ENCODE measurements at regions of chr9 and their contacts with region 1.

Region 1: GRCh38 chr9:98255578-98256296 is at the start of gene TBC1D2:
- DNase-seq: peak; percentile 85
- ATAC-seq: peak; percentile 94
- H3K4me3 ChIP-seq: peak within 1 kb of the TSS; percentile 75
- H3K27ac ChIP-seq: peak within 1 kb of the TSS; percentile 93
- H3K4me1 ChIP-seq: peaks cover 4% of the 10 kb centered on the region
- H3K27me3 ChIP-seq: no peaks in the 10 kb centered on the region
- CTCF ChIP-seq: peak; percentile 15 to 28 (median 21); a peak in 2 of 6 replicates
- EP300 ChIP-seq: no peak
- POLR2A ChIP-seq: peak; percentile 92
- RAD21 ChIP-seq: no peak
- polyA plus RNA-seq, gene TBC1D2: 0.04 to 0.06 TPM

Region 2: DNA sequence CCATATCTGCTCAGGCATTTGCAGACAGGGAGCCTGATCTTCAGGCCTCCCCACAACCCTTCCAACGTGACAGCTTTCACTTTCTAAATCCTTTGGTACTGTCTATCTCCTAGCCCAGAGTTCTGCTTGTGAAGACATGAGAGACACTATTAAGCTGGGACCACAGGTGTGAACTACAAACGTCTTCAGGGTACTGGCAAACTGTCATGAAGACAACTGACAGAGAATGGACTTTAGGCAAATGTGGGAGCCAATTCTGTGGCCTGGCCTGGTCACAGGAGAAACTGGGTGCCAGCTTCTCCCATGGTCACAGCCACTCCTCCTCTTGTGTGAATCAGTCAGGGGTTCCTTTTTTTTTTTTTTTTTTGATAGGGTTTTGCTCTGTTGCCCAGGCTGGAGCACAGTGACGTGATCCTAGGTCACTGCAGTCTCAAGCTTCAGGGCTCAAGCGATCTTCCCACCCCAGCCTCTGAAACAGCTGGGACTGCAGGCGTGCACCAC is 147.2 kb before region 1 on chr9:
- CTCF ChIA-PET with region 1: interaction called, 12 read pairs
- POLR2A ChIA-PET with region 1: interaction called, 5 read pairs
- RAD21 ChIA-PET with region 1: interaction called, 5 read pairs
- SMC1A ChIA-PET with region 1: interaction called, 4 read pairs
- in situ Hi-C with region 1: no loop called
- intact Hi-C with region 1: no loop called
- DNase-seq: peak; percentile 80
- ATAC-seq: peak; percentile 81
- H3K4me3 ChIP-seq: peak overlapping the region; percentile 19; the same call in 1 of the 2 replicates
- H3K27ac ChIP-seq: peak overlapping the region; percentile 91
- H3K4me1 ChIP-seq: peaks cover 62% of the 10 kb centered on the region
- H3K27me3 ChIP-seq: no peaks in the 10 kb centered on the region
- CTCF ChIP-seq: no peak
- EP300 ChIP-seq: peak in 1 of 2 experiments; percentile 23; a peak in 1 of 4 replicates
- POLR2A ChIP-seq: no peak
- RAD21 ChIP-seq: no peak

Region 3: GRCh38 chr9:98391867-98392266 is 136.1 kb after region 1 on chr9:
- CTCF ChIA-PET with region 1: no interaction called
- POLR2A ChIA-PET with region 1: no interaction called
- RAD21 ChIA-PET with region 1: no interaction called
- SMC1A ChIA-PET with region 1: no interaction called
- in situ Hi-C with region 1: no loop called
- intact Hi-C with region 1: no loop called
- DNase-seq: no peak
- ATAC-seq: no peak
- H3K4me3 ChIP-seq: no peak overlapping the region
- H3K27ac ChIP-seq: no peak overlapping the region
- H3K4me1 ChIP-seq: no peaks in the 10 kb centered on the region
- H3K27me3 ChIP-seq: no peaks in the 10 kb centered on the region
- CTCF ChIP-seq: no peak
- EP300 ChIP-seq: no peak
- POLR2A ChIP-seq: no peak
- RAD21 ChIP-seq: no peak

Measured in GM12878 (cell line).